ENCODE measurements at regions of chr5 and their contacts with region 1.

Region 1: DNA sequence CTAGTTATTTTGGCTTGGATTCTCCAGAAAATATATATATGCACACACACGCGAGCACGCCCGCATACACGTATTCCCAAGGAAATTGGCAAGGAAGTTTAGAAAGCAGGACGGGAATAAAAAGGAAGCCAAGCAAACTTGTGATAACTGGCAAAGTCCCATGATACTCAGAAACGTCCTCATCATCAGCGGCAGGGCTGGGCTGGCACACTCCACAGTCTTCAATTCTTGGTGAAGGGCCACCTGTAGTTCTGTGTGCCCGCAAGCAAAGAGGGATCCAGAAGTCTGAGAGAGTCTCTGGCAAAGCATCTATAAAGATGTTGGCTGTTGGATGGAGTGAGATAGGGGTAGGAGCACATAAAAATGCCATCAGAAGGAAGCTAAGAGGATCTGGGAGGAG is 289.3 kb upstream of the CTNND2 start:
- DNase-seq: no peak
- H3K4me3 ChIP-seq: no peak overlapping the region
- H3K27ac ChIP-seq: no peak overlapping the region
- H3K4me1 ChIP-seq: no peaks in the 10 kb centered on the region
- H3K27me3 ChIP-seq: no peaks in the 10 kb centered on the region
- CTCF ChIP-seq: no peak

Region 2: GRCh38 chr5:12125895-12126294 is 67.6 kb before region 1 on chr5:
- CTCF ChIA-PET with region 1: no interaction called
- POLR2A ChIA-PET with region 1: no interaction called
- intact Hi-C with region 1: no loop called
- DNase-seq: peak in 1 of 2 experiments; percentile 4
- H3K4me3 ChIP-seq: no peak overlapping the region
- H3K27ac ChIP-seq: no peak overlapping the region
- H3K4me1 ChIP-seq: no peaks in the 10 kb centered on the region
- H3K27me3 ChIP-seq: no peaks in the 10 kb centered on the region
- CTCF ChIP-seq: no peak

Region 3: DNA sequence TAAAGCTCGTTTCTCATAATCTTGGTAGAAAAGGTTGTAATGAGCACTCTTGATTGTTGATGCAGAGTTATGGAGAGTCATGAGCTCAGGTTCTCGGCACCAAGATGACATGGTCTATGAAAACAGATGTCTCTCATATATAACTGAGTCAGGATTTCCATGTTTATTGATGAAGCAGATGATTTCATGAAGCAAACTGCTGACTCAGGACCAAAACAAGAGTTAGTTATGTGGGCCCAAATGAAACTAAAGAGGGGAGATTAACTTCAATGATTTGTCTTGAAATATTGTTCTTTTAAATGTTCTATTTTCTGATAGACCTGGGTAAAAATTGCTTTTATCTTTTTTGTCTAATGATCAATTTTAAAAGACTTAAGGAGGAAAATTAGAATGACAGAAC is 30.7 kb before region 1 on chr5:
- CTCF ChIA-PET with region 1: no interaction called
- POLR2A ChIA-PET with region 1: no interaction called
- intact Hi-C with region 1: loop called (anchors 1 kb)
- DNase-seq: no peak
- H3K4me3 ChIP-seq: no peak overlapping the region
- H3K27ac ChIP-seq: no peak overlapping the region
- H3K4me1 ChIP-seq: no peaks in the 10 kb centered on the region
- H3K27me3 ChIP-seq: no peaks in the 10 kb centered on the region
- CTCF ChIP-seq: no peak